ENCODE measurements at regions of chr7 and their contacts with region 1.

Region 1: DNA sequence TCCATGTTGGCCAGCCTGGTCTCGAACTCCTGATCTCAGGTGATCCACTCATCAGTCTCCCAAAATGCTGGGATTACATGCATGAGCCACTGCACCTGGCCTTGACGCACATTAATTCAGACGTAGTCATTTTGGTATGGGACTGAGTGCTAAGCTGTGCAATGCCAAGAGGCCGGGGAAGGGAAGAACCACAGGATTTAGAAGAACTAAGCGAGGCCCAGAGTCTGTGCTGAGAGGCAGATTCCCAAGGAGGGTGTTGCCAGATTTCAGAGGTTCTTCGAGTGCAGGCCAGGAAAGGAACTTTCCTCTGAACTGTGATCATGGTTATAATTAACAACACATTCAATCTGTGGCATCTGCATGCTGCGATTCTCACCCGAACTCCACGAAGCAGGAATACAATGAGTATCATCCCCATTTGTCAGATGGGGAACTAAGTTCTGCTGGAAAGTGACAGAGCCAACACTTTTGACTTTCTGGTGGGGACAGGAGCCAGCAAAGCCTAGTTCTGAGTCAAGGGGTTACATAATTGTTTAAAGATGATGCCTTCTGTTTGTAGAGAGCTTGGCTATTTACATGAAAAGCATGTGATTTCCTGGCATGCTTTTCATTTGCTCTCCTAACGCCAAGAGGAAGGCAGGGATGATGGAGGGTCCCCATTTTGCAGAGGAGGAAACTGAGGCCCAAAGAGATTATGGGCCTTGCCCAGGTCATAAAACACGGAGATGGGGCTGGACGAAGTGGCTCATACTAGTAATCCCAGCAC is 6.2 kb upstream of the ZAN start:
- DNase-seq: no peak
- ATAC-seq: no peak
- H3K4me3 ChIP-seq: no peak overlapping the region
- H3K27ac ChIP-seq: no peak overlapping the region
- H3K4me1 ChIP-seq: peaks cover 0 to 6% (median 0%) of the 10 kb centered on the region in 9 donors
- H3K27me3 ChIP-seq: peaks cover 0 to 67% (median 28%) of the 10 kb centered on the region in 7 donors
- CTCF ChIP-seq: no peak

Region 2: DNA sequence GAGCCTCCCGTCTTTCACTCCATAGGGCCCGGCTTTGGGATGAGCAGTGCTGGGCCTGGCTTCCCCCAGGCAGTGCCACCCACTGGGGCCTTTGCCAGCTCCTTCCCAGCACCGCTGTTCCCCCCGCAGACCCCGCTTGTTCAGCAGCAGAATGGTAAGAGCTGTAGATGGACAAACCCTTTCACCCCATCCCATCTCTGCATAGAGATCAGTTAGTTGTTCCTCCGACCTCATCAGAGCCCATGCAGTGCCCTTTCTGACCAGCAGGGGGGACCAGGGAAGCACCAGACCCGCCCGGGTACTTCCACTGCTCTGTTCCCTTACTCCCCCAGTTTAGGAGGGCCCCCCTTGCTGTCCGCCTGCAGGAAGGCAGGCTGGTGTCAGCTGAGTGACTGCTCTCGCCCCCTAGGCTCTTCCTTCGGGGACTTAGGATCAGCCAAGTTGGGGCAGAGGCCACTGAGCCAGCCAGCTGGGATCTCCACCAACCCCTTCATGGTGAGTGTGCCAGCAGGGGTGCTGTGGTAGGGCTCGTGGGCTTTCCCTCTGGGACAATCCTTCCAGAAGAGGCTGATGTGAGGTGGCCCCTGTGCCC is 163.3 kb before region 1 on chr7:
- intact Hi-C with region 1: loop called in 1 of 10 experiments (anchors 5 kb)
- DNase-seq: peak; percentile 82 to 83
- ATAC-seq: peak; percentile 41 to 78 (median 62)
- H3K4me3 ChIP-seq: no peak overlapping the region
- H3K27ac ChIP-seq: no peak overlapping the region
- H3K4me1 ChIP-seq: peaks cover 0 to 21% (median 4%) of the 10 kb centered on the region in 9 donors
- H3K27me3 ChIP-seq: no peaks in the 10 kb centered on the region
- CTCF ChIP-seq: peak; percentile 88 to 98 (median 94)

Region 3: DNA sequence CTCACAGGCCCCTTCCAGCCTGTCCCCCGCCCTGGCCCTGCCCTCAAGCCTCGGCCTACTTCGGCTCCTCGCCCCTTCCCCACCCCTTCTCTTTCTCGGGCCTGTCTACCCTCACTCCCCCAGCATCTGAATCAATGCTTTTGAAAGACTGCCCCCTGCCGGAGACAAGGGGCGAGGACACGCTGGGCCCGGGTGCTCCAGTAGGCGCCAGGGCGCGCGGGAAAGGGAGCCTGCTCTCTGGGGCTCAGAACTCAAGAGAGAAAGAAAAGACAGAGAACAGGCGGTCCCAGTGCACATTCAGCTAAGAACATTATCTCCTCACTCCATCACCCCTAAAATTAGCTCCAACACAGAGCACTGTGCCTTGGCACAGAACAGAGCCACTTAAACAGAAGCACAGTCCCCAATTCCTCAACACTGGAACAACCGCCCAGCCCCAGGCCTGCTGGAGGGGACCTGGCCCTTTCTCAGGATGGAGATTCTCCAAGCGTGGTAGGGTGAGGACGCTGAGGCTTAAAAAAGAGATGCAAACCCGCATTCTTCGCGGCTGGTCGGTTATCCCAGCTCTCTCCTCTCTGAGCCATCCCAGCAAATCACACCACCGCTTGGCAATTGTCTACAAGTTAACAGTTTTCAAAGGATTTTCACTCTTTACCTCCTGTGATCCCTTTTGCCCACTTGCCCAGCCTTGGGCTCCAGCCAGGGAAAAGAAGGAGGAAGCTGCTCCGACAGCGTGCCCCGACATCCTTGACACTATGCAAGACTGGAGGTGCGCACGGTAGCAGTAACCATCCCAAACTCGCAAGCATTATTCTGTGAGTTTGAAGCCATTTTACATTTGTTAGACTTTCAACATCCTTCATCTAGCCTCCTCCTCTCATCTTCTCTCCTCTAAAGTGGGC is 35.3 kb before region 1 on chr7:
- intact Hi-C with region 1: no loop called
- DNase-seq: peak; percentile 81 to 83
- ATAC-seq: peak; percentile 72 to 92 (median 86)
- H3K4me3 ChIP-seq: peak overlapping the region in 9 of 10 donors; percentile 3 to 99 (median 80)
- H3K27ac ChIP-seq: peak overlapping the region in 6 of 10 donors; percentile 15 to 87 (median 46)
- H3K4me1 ChIP-seq: peaks cover 34 to 67% (median 51%) of the 10 kb centered on the region in 9 donors
- H3K27me3 ChIP-seq: no peaks in the 10 kb centered on the region
- CTCF ChIP-seq: peak; percentile 70 to 92 (median 90)

Region 4: DNA sequence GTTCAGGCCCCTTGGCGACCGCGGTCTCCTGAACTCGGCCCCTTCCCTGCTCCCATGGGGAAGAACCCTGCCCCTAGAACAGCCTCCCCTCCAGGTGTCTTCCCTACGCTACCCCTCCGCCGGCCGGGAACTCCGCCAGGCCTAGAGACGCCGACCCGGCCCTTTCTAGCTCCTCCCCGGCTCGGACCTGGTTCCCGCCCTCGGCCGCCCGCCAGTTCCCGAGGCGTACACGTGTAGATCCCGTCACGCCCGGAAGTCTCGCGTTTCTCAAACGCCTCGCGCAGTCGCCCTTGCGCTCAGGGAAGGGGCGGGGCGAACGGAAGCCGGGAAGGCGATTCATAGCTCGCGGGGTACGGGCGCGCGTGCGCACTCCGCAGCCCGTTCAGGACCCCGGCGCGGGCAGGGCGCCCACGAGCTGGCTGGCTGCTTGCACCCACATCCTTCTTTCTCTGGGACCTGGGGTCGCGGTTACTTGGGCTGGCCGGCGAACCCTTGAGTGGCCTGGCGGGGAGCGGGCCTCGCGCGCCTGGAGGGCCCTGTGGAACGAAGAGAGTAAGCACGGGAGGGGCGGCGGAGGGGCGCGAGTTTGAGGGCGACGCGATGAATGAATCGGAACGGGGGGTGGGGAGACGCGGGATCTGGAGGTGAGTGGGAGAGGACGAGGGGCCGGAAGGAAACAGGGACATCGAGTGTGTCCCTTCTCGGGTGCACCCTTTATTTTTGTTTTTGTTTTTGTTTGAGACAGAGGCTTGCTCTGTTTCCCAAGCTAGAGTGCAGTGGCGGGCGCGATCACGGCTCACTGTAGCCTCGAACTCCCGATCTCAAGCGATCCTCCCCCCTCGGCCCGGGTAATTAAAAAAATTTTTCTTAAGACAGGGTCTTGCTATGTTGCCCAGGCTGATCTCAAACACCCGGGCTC is 21.2 kb before region 1 on chr7 and contains the start of gene POP7:
- intact Hi-C with region 1: loop called in 1 of 10 experiments (anchors 1 kb)
- DNase-seq: peak; percentile 99
- ATAC-seq: peak; percentile 97 to 99 (median 98)
- H3K4me3 ChIP-seq: peak within 1 kb of the TSS; percentile 63 to 95 (median 77)
- H3K27ac ChIP-seq: peak within 1 kb of the TSS; percentile 84 to 99 (median 94)
- H3K4me1 ChIP-seq: peaks cover 4 to 24% (median 17%) of the 10 kb centered on the region in 9 donors
- H3K27me3 ChIP-seq: no peaks in the 10 kb centered on the region
- CTCF ChIP-seq: no peak
- total RNA-seq, gene POP7: 23.2 to 34.9 (median 25.3) TPM

Region 5: DNA sequence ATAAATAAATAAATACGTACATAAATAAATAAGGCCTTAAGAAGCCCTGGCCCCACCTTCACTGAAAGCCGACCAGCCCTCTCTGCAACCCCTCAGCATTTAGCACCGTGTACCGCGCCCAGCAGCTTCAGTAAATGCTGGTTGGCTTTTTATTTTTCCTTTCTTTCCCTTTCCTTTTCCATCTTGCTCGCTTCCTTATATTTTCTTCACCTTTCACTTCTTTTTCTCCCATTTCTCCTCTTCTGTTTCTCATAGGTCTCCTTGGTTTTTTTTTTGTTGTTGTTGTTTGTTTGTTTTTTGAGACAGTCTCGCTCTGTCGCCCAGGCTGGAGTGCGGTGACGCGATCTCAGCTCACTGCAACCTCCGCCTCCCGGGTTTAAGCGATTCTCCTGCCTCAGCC is 17.4 kb after region 1 on chr7:
- intact Hi-C with region 1: loop called in 1 of 10 experiments (anchors 1 kb)
- DNase-seq: no peak
- ATAC-seq: no peak
- H3K4me3 ChIP-seq: peak overlapping the region in 3 of 10 donors; percentile 46 to 49 (median 46)
- H3K27ac ChIP-seq: no peak overlapping the region
- H3K4me1 ChIP-seq: no peaks in the 10 kb centered on the region
- H3K27me3 ChIP-seq: peaks cover 0 to 49% (median 40%) of the 10 kb centered on the region in 7 donors
- CTCF ChIP-seq: no peak

Region 6: GRCh38 chr7:100763556-100764140 is 36.5 kb after region 1 on chr7:
- intact Hi-C with region 1: no loop called
- DNase-seq: no peak
- ATAC-seq: no peak
- H3K4me3 ChIP-seq: no peak overlapping the region
- H3K27ac ChIP-seq: no peak overlapping the region
- H3K4me1 ChIP-seq: no peaks in the 10 kb centered on the region
- H3K27me3 ChIP-seq: peaks cover 0 to 21% (median 4%) of the 10 kb centered on the region in 7 donors
- CTCF ChIP-seq: no peak